HCT116 (cell line): ENCODE measurements at regions of chr11 and their contacts with region 1.

Region 1: GRCh38 chr11:116691771-116692177 is 81.0 kb downstream of the BUD13 start:
- DNase-seq: peak; percentile 6
- ATAC-seq: peak; percentile 95
- H3K4me3 ChIP-seq: no peak overlapping the region
- H3K27ac ChIP-seq: no peak overlapping the region
- H3K4me1 ChIP-seq: peaks cover 0 to 8% of the 10 kb centered on the region in 2 experiments; a peak in 2 of 4 replicates
- H3K27me3 ChIP-seq: 0 out of 2 replicates have a peak, but pooled peaks cover 4% of the 10 kb centered on the region
- CTCF ChIP-seq: peak; percentile 68 to 92 (median 85)
- POLR2A ChIP-seq: no peak
- RAD21 ChIP-seq: peak; percentile 88

Region 2: GRCh38 chr11:115334932-115335788 is 1356.6 kb before region 1 on chr11:
- CTCF ChIA-PET with region 1: no interaction called
- POLR2A ChIA-PET with region 1: no interaction called
- RAD21 ChIA-PET with region 1: no interaction called
- intact Hi-C with region 1: loop called (anchors 5 kb)
- DNase-seq: no peak
- ATAC-seq: no peak
- H3K4me3 ChIP-seq: no peak overlapping the region
- H3K27ac ChIP-seq: no peak overlapping the region
- H3K4me1 ChIP-seq: no peaks in the 10 kb centered on the region
- H3K27me3 ChIP-seq: no peaks in the 10 kb centered on the region
- CTCF ChIP-seq: peak; percentile 29 to 61 (median 50); a peak in 4 of 6 replicates
- POLR2A ChIP-seq: no peak
- RAD21 ChIP-seq: peak; percentile 42

Region 3: DNA sequence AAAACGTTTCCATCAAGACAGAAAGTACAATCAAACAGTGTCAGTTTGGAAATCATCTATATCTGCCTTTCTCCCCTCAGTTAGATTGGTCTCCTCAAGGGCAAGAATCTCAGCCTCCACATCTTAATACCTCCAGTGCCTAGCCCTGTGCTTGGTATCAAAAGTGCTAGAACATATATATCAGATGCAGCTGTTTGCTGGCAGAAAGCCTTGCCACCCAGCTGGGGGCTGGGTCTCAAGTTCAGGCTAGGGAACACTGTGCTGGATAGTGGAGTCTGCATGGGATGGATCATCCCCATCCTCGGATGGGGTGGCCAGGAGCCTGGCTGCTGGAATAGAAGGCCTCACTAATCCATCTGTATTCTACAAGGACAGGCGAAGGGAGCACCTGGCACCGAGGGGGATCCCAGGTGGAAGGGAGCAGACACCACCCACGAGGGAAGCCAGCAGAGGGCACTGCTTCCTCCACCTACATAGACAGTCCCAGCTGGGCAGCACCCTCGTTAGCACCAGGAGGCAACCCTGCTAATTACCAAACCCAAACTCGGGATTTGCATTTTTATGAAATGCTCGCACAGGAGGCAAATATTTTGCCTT is 521.1 kb before region 1 on chr11:
- CTCF ChIA-PET with region 1: no interaction called
- POLR2A ChIA-PET with region 1: no interaction called
- RAD21 ChIA-PET with region 1: no interaction called
- intact Hi-C with region 1: loop called (anchors 2 kb)
- DNase-seq: no peak
- ATAC-seq: peak; percentile 77
- H3K4me3 ChIP-seq: no peak overlapping the region
- H3K27ac ChIP-seq: no peak overlapping the region
- H3K4me1 ChIP-seq: no peaks in the 10 kb centered on the region
- H3K27me3 ChIP-seq: peaks cover 7% of the 10 kb centered on the region; the same call in 1 of the 2 replicates
- CTCF ChIP-seq: peak in 2 of 3 experiments; percentile 39 to 40; a peak in 4 of 6 replicates
- POLR2A ChIP-seq: no peak
- RAD21 ChIP-seq: no peak

Region 4: GRCh38 chr11:116276051-116277044 is 415.4 kb before region 1 on chr11:
- CTCF ChIA-PET with region 1: no interaction called
- POLR2A ChIA-PET with region 1: no interaction called
- RAD21 ChIA-PET with region 1: no interaction called
- intact Hi-C with region 1: loop called (anchors 1 kb)
- DNase-seq: peak; percentile 72
- ATAC-seq: peak; percentile 94
- H3K4me3 ChIP-seq: no peak overlapping the region
- H3K27ac ChIP-seq: no peak overlapping the region
- H3K4me1 ChIP-seq: no peaks in the 10 kb centered on the region
- H3K27me3 ChIP-seq: peaks cover 20% of the 10 kb centered on the region
- CTCF ChIP-seq: peak; percentile 84 to 97 (median 95)
- POLR2A ChIP-seq: no peak
- RAD21 ChIP-seq: peak; percentile 81

Region 5: DNA sequence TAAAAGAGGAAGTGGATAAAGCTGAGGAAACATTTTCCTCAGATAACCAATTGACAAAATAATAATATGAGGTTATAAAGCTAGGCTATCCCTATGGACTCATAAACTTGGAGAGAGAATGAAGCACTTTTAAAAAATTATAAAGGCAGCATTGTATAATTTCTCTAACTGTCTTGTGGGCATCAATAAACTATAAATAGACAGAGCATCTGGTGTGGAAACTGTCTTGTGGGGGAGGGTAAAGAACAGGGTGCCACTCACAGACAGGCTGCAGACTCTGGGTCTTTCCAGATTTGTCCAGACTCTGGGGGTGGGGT is 252.5 kb before region 1 on chr11:
- CTCF ChIA-PET with region 1: no interaction called
- POLR2A ChIA-PET with region 1: no interaction called
- RAD21 ChIA-PET with region 1: no interaction called
- intact Hi-C with region 1: no loop called
- DNase-seq: no peak
- ATAC-seq: no peak
- H3K4me3 ChIP-seq: no peak overlapping the region
- H3K27ac ChIP-seq: no peak overlapping the region
- H3K4me1 ChIP-seq: no peaks in the 10 kb centered on the region
- H3K27me3 ChIP-seq: peaks cover 18% of the 10 kb centered on the region
- CTCF ChIP-seq: no peak
- POLR2A ChIP-seq: no peak
- RAD21 ChIP-seq: no peak

Region 6: GRCh38 chr11:116454020-116454645 is 237.6 kb before region 1 on chr11:
- CTCF ChIA-PET with region 1: interaction called, 5 read pairs
- POLR2A ChIA-PET with region 1: no interaction called
- RAD21 ChIA-PET with region 1: no interaction called
- intact Hi-C with region 1: loop called (anchors 1 kb)
- DNase-seq: no peak
- ATAC-seq: peak; percentile 92
- H3K4me3 ChIP-seq: no peak overlapping the region
- H3K27ac ChIP-seq: no peak overlapping the region
- H3K4me1 ChIP-seq: no peaks in the 10 kb centered on the region
- H3K27me3 ChIP-seq: no peaks in the 10 kb centered on the region
- CTCF ChIP-seq: peak; percentile 61 to 64 (median 61)
- POLR2A ChIP-seq: no peak
- RAD21 ChIP-seq: peak; percentile 65